Activated CD4-positive, alpha-beta T cell treated with anti-CD3 and anti-CD28 coated beads, Interleukin-2, amount 10 ng/mL, durations not matched to agents 24 days and 14 days (primary cell): ENCODE measurements at regions of chr1 and their contacts with region 1.

Region 1: DNA sequence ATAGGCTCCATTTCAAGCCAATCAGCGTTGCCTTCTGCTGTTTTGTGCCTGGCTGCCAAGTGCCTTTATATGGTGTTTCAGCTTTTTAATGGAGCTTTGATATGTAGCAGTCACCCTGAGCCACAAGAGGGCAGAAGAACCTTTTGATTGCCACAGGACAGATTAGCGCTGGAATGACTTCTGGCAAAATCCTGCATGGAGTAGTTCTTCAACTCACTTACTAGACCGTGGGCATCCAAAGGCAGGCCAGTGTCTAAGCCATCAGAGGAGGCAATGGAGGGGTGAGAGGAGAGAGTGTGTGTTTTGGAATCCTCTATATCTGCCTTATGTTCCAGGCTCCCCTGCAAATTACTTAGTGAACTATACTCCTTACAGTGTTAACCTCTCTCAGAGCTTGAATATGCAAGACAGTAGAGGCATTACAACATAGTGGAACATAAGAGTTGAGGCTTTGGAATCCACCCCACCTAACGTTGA is 56.2 kb downstream of the ST3GAL3 start:
- DNase-seq: peak; percentile 85
- H3K4me3 Mint-ChIP-seq: no peak overlapping the region
- H3K27ac Mint-ChIP-seq: no peak overlapping the region
- H3K4me1 Mint-ChIP-seq: peaks cover 2% of the 10 kb centered on the region
- H3K27me3 Mint-ChIP-seq: no peaks in the 10 kb centered on the region

Region 2: DNA sequence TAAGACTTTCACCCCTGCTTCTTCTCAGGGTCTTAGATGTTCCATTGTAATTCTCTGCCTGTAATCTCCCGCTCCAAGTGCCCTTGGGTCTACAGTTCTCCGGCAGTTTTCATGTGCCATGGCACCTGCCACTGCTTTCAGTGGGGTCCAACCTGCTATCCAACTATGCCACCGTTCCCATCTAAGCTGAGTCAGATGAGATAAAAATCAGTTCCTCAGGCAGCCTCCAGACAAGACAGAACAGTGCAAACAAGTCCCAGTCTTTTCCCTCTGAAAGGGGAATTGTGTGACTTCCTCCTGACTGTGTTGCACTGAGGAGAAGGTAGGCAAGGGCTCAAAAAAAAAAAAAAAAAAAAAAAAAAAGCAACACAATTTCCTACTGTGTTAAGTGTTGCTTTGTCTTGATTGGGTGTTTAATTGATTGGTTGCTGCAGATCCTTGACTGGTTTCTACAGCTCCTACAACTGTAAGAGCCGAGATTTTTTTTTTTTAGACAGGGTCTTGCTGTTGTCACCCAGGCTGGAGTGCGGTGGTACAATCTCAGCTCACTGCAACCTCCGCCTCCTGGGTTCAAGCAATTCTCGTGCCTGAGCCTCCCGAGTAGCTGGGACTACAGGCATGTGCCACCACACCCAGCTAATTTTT is 642.2 kb before region 1 on chr1:
- intact Hi-C with region 1: no loop called
- DNase-seq: no peak
- H3K4me3 Mint-ChIP-seq: no peak overlapping the region
- H3K27ac Mint-ChIP-seq: no peak overlapping the region
- H3K4me1 Mint-ChIP-seq: no peaks in the 10 kb centered on the region
- H3K27me3 Mint-ChIP-seq: peaks cover 11% of the 10 kb centered on the region

Region 3: GRCh38 chr1:43934101-43934985 is 170.8 kb after region 1 on chr1:
- intact Hi-C with region 1: loop called (anchors 1 kb)
- DNase-seq: peak; percentile 87
- H3K4me3 Mint-ChIP-seq: peak overlapping the region; percentile 23
- H3K27ac Mint-ChIP-seq: no peak overlapping the region
- H3K4me1 Mint-ChIP-seq: peaks cover 11% of the 10 kb centered on the region
- H3K27me3 Mint-ChIP-seq: peaks cover 9% of the 10 kb centered on the region